ENCODE measurements at regions of chr2 and their contacts with region 1.

Region 1: DNA sequence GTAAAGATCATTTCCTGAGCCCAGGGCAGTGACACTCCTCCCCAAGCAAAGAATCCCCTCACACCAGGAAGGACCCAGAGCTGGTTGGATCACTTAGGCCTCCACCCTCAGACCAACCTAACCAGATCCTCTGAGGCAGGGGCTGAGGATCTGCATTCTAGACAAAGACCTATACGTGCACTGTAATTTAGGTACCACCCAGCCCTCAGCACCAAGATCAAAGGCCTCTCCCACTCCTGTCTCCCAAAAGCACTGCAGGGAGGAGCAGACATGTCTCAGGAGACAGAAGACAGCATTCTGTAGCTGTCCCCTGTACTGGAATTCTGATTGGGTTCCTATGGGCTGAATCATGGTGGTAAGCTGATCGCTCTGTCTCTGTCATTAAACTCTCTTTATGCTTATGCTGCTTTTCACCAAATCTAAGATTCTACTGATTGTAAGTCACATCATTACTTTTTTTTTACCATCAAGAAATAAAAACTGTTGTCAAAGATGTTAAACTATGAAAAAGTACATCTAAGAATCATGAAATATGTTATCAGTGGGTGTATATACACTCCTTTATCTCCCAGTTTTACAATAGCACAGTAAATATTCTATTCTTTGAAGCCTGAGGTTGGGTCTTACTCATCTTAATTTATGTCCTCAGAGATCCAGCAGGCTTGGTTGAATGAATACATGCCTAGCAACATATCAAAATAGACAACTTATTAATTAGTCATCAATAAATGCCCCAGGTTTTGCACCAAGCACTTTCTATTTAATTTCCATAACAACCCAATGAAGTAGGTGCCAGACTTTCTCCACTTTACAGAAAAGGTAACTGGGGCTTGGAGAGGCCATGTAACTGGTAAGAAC is 28.3 kb downstream of the MCFD2 start:
- DNase-seq: peak; percentile 35
- H3K4me3 ChIP-seq: no peak overlapping the region
- H3K27ac ChIP-seq: no peak overlapping the region
- H3K4me1 ChIP-seq: peaks cover 0 to 13% (median 8%) of the 10 kb centered on the region in 4 donors
- H3K27me3 ChIP-seq: no peaks in the 10 kb centered on the region
- CTCF ChIP-seq: no peak
- EP300 ChIP-seq: no peak
- POLR2A ChIP-seq: no peak

Region 2: DNA sequence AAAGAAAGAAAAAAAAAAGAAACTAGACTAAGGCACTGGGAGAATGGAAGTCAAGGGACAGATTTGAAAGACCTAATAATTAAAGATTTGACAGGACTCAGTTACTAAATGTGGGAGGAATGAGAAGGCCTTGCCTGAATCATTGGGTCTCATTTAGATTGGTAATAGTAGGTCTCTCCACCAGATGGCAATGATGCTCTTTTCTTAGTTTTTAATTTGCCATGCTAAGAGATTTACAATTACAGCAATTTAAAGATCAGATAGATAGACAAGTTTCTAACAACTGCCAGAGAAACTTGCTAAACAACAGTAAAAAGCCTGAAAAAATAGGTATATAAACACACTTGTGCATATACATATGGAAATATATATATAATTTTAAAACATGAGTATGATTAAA is 254.9 kb before region 1 on chr2:
- intact Hi-C with region 1: loop called (anchors 1 kb)
- DNase-seq: no peak
- H3K4me3 ChIP-seq: no peak overlapping the region
- H3K27ac ChIP-seq: no peak overlapping the region
- H3K4me1 ChIP-seq: no peaks in the 10 kb centered on the region
- H3K27me3 ChIP-seq: no peaks in the 10 kb centered on the region
- CTCF ChIP-seq: peak in 3 of 4 experiments; percentile 26 to 54 (median 29)
- EP300 ChIP-seq: no peak
- POLR2A ChIP-seq: no peak

Region 3: DNA sequence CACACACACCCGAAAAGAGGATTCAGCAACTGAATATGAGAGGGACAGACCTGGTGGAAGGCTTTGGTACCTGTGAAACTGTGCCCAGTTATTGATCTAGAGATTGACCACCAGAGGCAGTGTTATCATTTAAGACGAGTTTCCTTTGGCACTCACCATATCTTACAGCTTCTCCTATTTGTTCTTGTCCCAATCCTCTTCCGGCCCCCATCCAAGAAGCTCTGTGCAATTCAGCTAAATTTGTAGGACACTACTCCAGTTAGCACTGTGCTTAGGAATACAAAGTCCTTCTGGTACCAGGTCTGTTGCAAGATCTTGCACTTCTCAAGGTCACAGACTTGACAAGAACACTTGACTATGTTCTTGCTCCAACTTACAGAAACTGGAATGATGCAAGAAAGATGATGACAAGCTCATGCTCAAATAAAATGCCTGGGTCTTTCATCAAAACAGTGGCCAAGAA is 230.2 kb before region 1 on chr2:
- intact Hi-C with region 1: loop called (anchors 5 kb)
- DNase-seq: peak; percentile 93
- H3K4me3 ChIP-seq: no peak overlapping the region
- H3K27ac ChIP-seq: peak overlapping the region; percentile 46 to 72 (median 64)
- H3K4me1 ChIP-seq: peaks cover 0 to 34% (median 31%) of the 10 kb centered on the region in 4 donors
- H3K27me3 ChIP-seq: no peaks in the 10 kb centered on the region
- CTCF ChIP-seq: peak in 3 of 4 experiments; percentile 19 to 30 (median 28)
- EP300 ChIP-seq: peak in 3 of 4 donors; percentile 28 to 70 (median 62)
- POLR2A ChIP-seq: no peak

Region 4: DNA sequence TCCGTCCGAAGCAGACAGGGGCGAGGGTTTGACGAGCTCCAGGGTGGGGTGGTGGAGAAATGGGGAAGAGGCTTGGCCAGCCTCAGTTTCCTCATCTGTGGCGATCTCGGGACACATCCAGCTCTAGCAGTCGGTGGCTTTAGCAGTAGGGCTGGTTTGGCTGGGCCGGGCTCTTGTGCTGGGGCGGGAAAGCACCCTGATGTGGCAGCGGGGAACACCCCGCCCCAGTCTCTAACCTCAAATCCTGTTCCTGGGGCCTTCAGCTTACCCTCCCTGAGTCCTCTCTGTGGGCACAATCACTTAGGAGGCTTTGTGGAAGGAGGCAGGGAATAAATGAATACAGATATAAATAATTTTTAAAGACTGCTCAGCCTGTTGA is 54.9 kb after region 1 on chr2:
- intact Hi-C with region 1: no loop called
- DNase-seq: no peak
- H3K4me3 ChIP-seq: peak overlapping the region; percentile 72 to 93 (median 88)
- H3K27ac ChIP-seq: peak overlapping the region; percentile 83 to 93 (median 92)
- H3K4me1 ChIP-seq: peaks cover 0 to 30% (median 23%) of the 10 kb centered on the region in 4 donors
- H3K27me3 ChIP-seq: no peaks in the 10 kb centered on the region
- CTCF ChIP-seq: no peak
- EP300 ChIP-seq: no peak
- POLR2A ChIP-seq: no peak